Activated CD8-positive, alpha-beta memory T cell treated with anti-CD3 and anti-CD28 coated beads, Interleukin-2, amount 10 ng/mL, durations not matched to agents 7 days and 5 days (primary cell): ENCODE measurements at regions of chr1 and their contacts with region 1.

Region 1: GRCh38 chr1:110196917-110197765 is 13.0 kb upstream of the KCNC4 start:
- DNase-seq: peak; percentile 68
- ATAC-seq: peak; percentile 92
- H3K4me3 Mint-ChIP-seq: no peak overlapping the region
- H3K27ac Mint-ChIP-seq: no peak overlapping the region
- H3K4me1 Mint-ChIP-seq: no peaks in the 10 kb centered on the region
- H3K27me3 Mint-ChIP-seq: no peaks in the 10 kb centered on the region

Region 2: DNA sequence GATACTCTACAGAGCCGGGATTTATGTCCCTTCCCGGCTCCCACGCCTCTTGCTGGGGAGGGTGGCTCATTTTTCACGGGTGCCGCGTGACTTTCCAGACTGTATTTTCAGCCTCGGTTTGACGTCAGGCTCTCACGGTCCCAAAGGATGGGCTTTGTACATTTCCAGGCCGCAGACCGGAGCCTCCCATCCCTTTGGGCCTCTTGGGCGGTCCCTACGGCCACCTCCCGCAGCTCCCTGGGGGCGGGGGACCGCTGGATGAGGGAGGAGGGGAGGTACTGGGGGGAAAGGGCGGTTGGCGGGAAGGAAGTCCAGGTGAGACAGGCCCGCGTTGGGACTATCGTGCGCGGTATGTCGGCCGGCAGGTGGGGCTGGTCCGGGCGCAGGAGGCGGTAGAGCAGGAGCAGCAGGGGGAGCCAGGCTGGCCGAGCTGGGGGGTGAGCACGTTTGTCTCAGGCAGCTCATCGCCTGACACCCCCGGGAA is 67.0 kb before region 1 on chr1:
- CTCF ChIA-PET with region 1: no interaction called
- DNase-seq: no peak
- ATAC-seq: no peak
- H3K4me3 Mint-ChIP-seq: no peak overlapping the region
- H3K27ac Mint-ChIP-seq: no peak overlapping the region
- H3K4me1 Mint-ChIP-seq: no peaks in the 10 kb centered on the region
- H3K27me3 Mint-ChIP-seq: peaks cover 47% of the 10 kb centered on the region

Region 3: GRCh38 chr1:110312188-110313121 is 115.3 kb after region 1 on chr1:
- CTCF ChIA-PET with region 1: interaction called, 415 read pairs
- DNase-seq: peak; percentile 76
- ATAC-seq: peak; percentile 96
- H3K4me3 Mint-ChIP-seq: no peak overlapping the region
- H3K27ac Mint-ChIP-seq: no peak overlapping the region
- H3K4me1 Mint-ChIP-seq: no peaks in the 10 kb centered on the region
- H3K27me3 Mint-ChIP-seq: no peaks in the 10 kb centered on the region